HCT116 (cell line): ENCODE measurements at regions of chr17 and their contacts with region 1.

Region 1: GRCh38 chr17:41665566-41666236 is 23.0 kb upstream of the EIF1 start:
- DNase-seq: peak; percentile 66
- ATAC-seq: peak; percentile 84
- H3K4me3 ChIP-seq: peak overlapping the region; percentile 44 to 57
- H3K27ac ChIP-seq: peak overlapping the region; percentile 69
- H3K4me1 ChIP-seq: peaks cover 14 to 61% of the 10 kb centered on the region in 2 experiments
- H3K27me3 ChIP-seq: no peaks in the 10 kb centered on the region
- CTCF ChIP-seq: peak; percentile 70 to 94 (median 92)
- POLR2A ChIP-seq: peak; percentile 30
- RAD21 ChIP-seq: peak; percentile 42; the same call in 1 of the 2 replicates

Region 2: DNA sequence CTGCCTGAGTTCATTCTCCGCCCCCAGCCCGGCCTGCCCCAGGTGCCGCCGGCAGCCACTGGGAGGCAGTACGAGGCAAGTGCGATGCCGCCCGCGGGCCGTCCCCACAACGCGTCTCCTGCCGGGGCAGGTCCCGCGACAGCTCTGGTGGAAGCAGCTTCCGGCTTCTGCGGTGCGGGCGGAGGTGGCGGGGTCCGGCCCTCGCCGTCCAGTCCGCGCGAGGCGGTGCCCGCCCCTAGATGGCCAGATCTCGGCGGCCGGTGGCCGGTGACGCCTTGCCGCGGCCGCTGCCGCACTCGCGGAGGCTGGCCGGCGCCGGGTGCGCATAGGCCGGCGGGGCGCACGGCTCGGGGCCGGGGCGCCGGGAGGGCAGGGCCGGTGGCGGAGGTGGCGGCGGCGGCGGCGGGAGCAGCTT is 1303.0 kb before region 1 on chr17:
- CTCF ChIA-PET with region 1: no interaction called
- POLR2A ChIA-PET with region 1: no interaction called
- RAD21 ChIA-PET with region 1: no interaction called
- intact Hi-C with region 1: loop called (anchors 2 kb)
- DNase-seq: peak; percentile 54
- ATAC-seq: peak; percentile 90
- H3K4me3 ChIP-seq: peak overlapping the region; percentile 42 to 55
- H3K27ac ChIP-seq: peak overlapping the region; percentile 67; the same call in 1 of the 2 replicates
- H3K4me1 ChIP-seq: peaks cover 4 to 31% of the 10 kb centered on the region in 2 experiments; a peak in 3 of 4 replicates
- H3K27me3 ChIP-seq: no peaks in the 10 kb centered on the region
- CTCF ChIP-seq: peak; percentile 80 to 90 (median 87)
- POLR2A ChIP-seq: no peak
- RAD21 ChIP-seq: peak; percentile 88

Region 3: GRCh38 chr17:40803617-40804082 is 862.1 kb before region 1 on chr17:
- CTCF ChIA-PET with region 1: interaction called, 7 read pairs
- POLR2A ChIA-PET with region 1: no interaction called
- RAD21 ChIA-PET with region 1: no interaction called
- intact Hi-C with region 1: loop called (anchors 1 kb)
- DNase-seq: peak; percentile 74
- ATAC-seq: peak; percentile 99
- H3K4me3 ChIP-seq: no peak overlapping the region
- H3K27ac ChIP-seq: no peak overlapping the region
- H3K4me1 ChIP-seq: peaks cover 3 to 9% of the 10 kb centered on the region in 2 experiments; a peak in 3 of 4 replicates
- H3K27me3 ChIP-seq: no peaks in the 10 kb centered on the region
- CTCF ChIP-seq: peak; percentile 82 to 96 (median 88)
- POLR2A ChIP-seq: no peak
- RAD21 ChIP-seq: peak; percentile 98

Region 4: DNA sequence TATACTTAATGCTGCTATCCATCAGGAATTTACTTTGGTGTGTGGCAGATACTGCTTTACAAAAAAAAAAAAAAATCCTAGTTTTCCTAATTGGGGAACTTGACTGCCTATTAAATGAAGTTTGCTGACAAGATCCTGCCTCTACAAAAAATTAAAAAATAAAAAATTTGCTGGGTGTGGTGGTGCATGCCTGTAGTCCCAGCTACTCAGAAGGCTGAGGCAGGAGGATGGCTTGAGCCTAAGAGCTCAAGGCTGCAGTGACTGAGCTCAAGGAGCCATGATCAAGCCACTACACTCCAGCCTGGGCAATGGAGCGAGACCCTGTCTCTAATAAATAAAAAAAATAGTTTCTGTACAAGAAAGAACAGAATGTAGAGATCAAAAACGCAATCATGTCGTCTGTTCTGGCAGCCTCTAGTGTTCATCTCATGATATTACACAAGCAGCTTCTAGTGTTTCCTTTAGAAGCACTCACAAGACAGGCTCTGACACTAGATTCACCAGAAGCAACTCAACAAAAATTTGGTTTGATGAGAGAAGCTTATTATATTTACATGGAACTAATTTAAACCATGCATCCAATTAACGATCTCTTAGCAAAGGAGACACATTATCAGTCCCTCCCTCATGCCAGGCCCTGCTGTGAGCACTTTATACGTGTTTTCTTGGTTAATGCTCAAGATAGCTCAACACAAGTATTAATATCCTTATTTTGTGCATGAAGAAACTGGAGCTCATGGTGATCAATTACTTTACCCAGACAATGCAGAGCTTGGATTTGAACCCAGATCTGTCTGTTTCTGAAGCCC is 343.4 kb before region 1 on chr17:
- CTCF ChIA-PET with region 1: interaction called, 6 read pairs
- POLR2A ChIA-PET with region 1: no interaction called
- RAD21 ChIA-PET with region 1: no interaction called
- intact Hi-C with region 1: loop called (anchors 5 kb)
- DNase-seq: peak; percentile 35
- ATAC-seq: peak; percentile 46
- H3K4me3 ChIP-seq: no peak overlapping the region
- H3K27ac ChIP-seq: peak overlapping the region; percentile 35
- H3K4me1 ChIP-seq: peaks cover 5 to 18% of the 10 kb centered on the region in 2 experiments; a peak in 3 of 4 replicates
- H3K27me3 ChIP-seq: no peaks in the 10 kb centered on the region
- CTCF ChIP-seq: peak; percentile 52 to 67 (median 61); a peak in 5 of 6 replicates
- POLR2A ChIP-seq: no peak
- RAD21 ChIP-seq: peak; percentile 82

Region 5: DNA sequence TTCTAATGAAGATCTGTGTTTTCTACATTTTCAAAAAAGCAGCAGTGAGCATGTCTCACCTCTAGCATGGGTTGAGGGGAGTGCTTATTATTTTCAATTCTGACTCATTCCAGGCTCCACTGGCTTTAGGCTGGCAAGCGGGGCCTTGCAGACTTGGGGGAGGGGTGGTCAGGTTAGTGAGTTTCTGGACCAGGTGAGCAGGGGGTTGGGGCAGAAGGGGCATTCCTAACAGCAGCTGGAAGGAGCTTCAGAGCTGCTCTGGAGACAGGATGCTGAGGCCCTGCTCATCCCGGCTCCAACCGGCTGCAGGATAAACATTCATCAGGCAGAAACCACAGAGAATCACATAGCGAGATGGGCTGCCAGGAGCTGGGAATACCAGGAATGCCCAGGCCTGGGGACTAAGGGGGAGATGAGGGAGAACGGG is 127.1 kb before region 1 on chr17:
- CTCF ChIA-PET with region 1: interaction called, 13 read pairs
- POLR2A ChIA-PET with region 1: no interaction called
- RAD21 ChIA-PET with region 1: no interaction called
- intact Hi-C with region 1: no loop called
- DNase-seq: no peak
- ATAC-seq: no peak
- H3K4me3 ChIP-seq: no peak overlapping the region
- H3K27ac ChIP-seq: no peak overlapping the region
- H3K4me1 ChIP-seq: peaks cover 22 to 64% of the 10 kb centered on the region in 2 experiments
- H3K27me3 ChIP-seq: no peaks in the 10 kb centered on the region
- CTCF ChIP-seq: no peak
- POLR2A ChIP-seq: no peak
- RAD21 ChIP-seq: no peak

Region 6: GRCh38 chr17:41678907-41679739 is 13.4 kb after region 1 on chr17:
- CTCF ChIA-PET with region 1: interaction called, 15 read pairs
- POLR2A ChIA-PET with region 1: interaction called, 6 read pairs
- RAD21 ChIA-PET with region 1: interaction called in 1 of 2 experiments, 6 read pairs
- intact Hi-C with region 1: no loop called
- DNase-seq: no peak
- ATAC-seq: peak; percentile 64
- H3K4me3 ChIP-seq: peak overlapping the region in 1 of 2 experiments; percentile 21; a peak in 3 of 4 replicates
- H3K27ac ChIP-seq: peak overlapping the region; percentile 67
- H3K4me1 ChIP-seq: peaks cover 8 to 18% of the 10 kb centered on the region in 2 experiments
- H3K27me3 ChIP-seq: no peaks in the 10 kb centered on the region
- CTCF ChIP-seq: 0 out of 6 replicates have a peak, but pooled peaks of 2 of the 3 experiments have one; percentile 15 to 23
- POLR2A ChIP-seq: no peak
- RAD21 ChIP-seq: peak; percentile 34; the same call in 1 of the 2 replicates